RWPE1 (cell line): ENCODE measurements at regions of chr1 and their contacts with region 1.

Region 1: GRCh38 chr1:24688621-24689195 is 45.6 kb downstream of the SRRM1 start:
- DNase-seq: peak; percentile 75
- H3K27ac ChIP-seq: no peak overlapping the region
- CTCF ChIP-seq: peak; percentile 81

Region 2: DNA sequence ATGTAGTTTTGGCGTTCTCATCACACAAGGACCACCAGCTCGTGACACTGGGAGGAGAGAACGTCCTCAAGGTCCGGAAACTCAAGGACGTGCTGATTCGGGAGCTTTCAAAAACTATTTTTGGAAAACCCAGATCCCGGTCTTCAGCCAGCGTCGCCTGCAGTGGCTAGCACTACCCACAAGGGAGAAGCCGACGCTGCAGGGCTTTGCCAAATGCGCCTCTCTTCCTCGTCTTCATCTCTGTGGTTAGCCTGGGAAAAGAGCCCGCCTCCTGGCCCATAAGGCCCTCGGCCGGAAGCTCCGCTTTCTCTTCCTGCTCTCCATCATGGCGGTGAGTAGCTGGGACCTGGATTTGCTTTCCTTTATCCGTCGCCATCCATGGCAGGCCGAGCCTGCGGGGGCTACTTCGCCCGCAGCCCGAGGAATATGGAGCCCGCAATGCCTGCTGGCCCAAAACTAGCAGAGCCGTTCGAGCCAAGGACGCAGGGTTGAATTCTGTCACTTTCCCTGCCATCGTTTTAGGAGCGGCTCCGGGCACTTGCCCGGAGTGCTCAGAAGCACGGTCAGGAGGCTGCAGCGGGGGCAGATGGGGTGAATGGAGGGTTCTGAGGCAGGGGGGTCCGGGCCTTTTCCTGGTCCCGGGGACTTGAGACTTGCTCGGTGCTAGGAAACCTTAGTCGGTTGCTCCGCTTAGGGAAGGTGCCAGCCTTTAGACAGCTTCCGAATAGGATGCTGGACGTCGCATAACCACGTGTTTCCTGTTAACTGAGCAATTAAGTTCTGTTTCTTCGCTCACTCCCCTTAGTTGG is 997.0 kb before region 1 on chr1 and contains the start of gene RPL11:
- CTCF ChIA-PET with region 1: no interaction called
- POLR2A ChIA-PET with region 1: no interaction called
- DNase-seq: peak; percentile 94
- H3K27ac ChIP-seq: peak within 1 kb of the TSS; percentile 84
- CTCF ChIP-seq: peak; percentile 84

Region 3: GRCh38 chr1:24635195-24635843 is 53.4 kb before region 1 on chr1:
- CTCF ChIA-PET with region 1: interaction called, 4 read pairs
- POLR2A ChIA-PET with region 1: interaction called, 12 read pairs
- DNase-seq: peak; percentile 62
- H3K27ac ChIP-seq: no peak overlapping the region
- CTCF ChIP-seq: peak; percentile 72

Region 4: GRCh38 chr1:24744911-24745710 is 56.4 kb after region 1 on chr1 and contains the start of gene CLIC4:
- CTCF ChIA-PET with region 1: interaction called, 10 read pairs
- POLR2A ChIA-PET with region 1: no interaction called
- DNase-seq: peak; percentile 96
- H3K27ac ChIP-seq: peak within 1 kb of the TSS; percentile 89
- CTCF ChIP-seq: no peak

Region 5: DNA sequence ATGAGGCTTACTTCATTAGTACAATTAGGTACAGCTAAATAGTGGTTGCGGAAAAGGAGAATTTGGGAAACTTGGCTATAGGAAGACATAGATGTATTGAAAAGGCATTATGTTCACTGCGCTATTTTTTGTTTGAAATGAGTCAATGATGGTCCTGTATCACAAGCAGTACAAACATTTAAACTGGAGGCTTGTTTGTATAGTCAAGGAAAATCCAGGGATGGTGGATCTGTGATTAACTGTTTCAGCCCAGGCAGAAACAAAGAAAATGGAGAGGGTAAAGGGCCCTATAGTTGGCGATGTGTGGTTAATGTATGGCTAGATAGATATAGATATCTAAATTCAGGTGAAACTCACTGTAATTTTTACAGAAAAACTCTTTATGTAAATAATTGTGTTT is 136.5 kb after region 1 on chr1:
- CTCF ChIA-PET with region 1: interaction called, 27 read pairs
- POLR2A ChIA-PET with region 1: no interaction called
- DNase-seq: no peak
- H3K27ac ChIP-seq: no peak overlapping the region
- CTCF ChIP-seq: no peak

Region 6: DNA sequence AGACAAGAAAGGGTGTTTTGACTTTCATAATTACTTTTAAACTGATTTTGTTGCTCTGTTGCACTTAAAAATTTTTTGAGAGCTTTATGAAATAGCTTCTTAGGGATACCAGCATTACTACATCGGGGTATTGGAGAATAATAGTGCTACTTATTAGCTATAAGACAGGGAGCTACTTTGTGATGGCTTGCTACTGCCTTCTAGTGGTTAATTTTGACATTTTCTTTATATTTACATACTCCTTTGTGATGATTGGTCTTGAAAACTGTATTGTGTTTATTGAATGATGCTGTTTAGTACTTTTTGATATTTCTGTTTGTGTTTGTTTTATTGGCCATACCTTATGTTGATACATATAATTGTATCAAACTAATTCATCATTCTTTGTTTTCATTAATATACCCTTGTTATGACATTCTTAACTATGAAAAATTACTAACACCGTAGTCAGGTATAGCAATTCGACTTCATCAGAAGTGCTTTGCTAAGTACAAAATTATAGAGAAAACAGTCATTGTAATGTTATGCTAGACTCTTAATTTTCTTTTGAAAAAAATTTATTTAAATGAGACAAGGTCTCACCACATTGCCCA is 142.1 kb after region 1 on chr1:
- CTCF ChIA-PET with region 1: interaction called, 27 read pairs
- POLR2A ChIA-PET with region 1: no interaction called
- DNase-seq: peak; percentile 42
- H3K27ac ChIP-seq: no peak overlapping the region
- CTCF ChIP-seq: peak; percentile 92